ENCODE measurements at regions of chr1 and their contacts with region 1.

Region 1: DNA sequence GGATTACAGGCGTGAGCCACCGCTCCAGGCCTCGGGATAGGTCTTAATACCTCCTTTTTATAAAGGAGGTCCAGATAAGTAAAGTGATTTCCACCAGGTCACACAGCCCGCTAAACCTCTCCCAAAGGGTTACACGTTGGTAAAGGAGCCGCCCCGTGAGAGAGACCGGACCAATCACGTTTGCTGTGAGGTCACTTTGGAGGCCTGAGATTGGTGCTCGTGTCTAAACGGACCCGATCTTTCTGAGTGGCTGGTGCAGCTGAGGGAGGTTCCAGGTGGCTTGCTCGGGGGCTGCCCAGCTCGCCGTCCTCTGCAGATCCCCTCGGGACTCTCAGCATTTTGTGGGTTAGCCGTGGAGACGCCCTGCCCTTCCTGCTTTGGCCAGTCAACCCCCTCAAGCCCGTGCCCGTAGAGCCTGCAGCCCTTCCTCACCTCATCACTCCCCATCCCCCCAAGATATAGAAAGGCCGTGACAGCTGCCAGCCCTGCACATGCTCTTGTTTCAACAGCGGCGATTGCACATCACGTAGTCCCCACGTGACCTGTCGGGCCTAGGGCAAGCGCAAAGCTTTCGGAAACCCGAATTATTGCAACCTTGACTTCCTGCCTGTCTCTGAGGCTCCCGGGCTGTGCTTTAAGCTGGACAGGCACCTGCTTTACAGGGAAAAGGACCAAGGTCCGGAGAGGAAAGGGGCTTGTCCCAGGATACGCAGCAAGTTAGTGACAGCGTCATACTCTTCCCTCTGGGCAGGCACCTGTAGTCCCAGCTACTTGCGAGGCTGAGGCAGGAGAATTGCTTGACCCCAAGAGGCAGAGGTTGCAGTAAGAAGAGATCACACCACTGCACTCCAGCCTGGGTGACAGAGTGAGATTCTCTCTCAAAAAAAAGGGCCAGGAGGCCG is 5.0 kb upstream of the COA7 start:
- DNase-seq: peak; percentile 74
- ATAC-seq: peak; percentile 87
- H3K4me3 Mint-ChIP-seq: peak overlapping the region; percentile 87
- H3K27ac Mint-ChIP-seq: peak overlapping the region; percentile 98
- H3K4me1 Mint-ChIP-seq: peaks cover 26% of the 10 kb centered on the region
- H3K27me3 Mint-ChIP-seq: peaks cover 2% of the 10 kb centered on the region
- CTCF ChIP-seq: no peak

Region 2: GRCh38 chr1:50968158-50968820 is 1734.8 kb before region 1 on chr1:
- CTCF ChIA-PET with region 1: no interaction called
- POLR2A ChIA-PET with region 1: no interaction called
- intact Hi-C with region 1: loop called (anchors 10 kb)
- DNase-seq: peak; percentile 80
- ATAC-seq: peak; percentile 80
- H3K4me3 Mint-ChIP-seq: peak overlapping the region; percentile 98
- H3K27ac Mint-ChIP-seq: peak overlapping the region; percentile 87
- H3K4me1 Mint-ChIP-seq: peaks cover 18% of the 10 kb centered on the region
- H3K27me3 Mint-ChIP-seq: no peaks in the 10 kb centered on the region
- CTCF ChIP-seq: no peak

Region 3: DNA sequence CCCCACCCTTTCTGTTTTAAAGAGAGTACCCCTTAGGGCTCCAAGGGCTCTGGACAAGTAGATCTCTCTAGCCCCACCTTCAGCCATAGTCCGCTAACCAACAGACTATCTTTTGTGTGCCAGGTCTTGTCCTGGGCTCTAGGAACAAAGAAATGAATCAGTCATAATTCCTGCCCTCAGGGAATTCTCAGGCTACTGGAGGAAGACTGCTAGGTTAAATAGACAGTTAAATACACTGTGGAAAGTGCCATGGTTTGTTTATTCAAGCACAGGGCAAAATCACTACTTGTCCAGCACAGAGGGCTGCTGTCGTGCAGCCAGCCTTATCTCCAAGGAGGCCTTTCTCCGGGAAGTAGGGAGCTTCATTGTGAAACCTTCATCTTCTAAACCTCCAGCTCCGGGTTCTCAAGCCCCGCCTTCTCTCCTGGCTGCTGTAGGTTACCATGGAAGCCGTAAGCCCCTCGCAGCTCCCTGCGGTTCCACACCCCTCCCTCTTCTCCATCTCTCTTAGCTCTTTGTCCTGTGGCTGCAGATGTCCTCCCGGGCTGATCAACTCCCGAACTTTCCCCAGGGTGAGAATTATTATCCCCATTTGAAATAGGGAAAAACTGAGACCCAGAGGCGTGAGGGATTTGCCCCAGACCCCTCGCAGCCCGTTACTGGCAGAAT is 40.4 kb before region 1 on chr1:
- CTCF ChIA-PET with region 1: no interaction called
- POLR2A ChIA-PET with region 1: no interaction called
- intact Hi-C with region 1: no loop called
- DNase-seq: no peak
- ATAC-seq: no peak
- H3K4me3 Mint-ChIP-seq: no peak overlapping the region
- H3K27ac Mint-ChIP-seq: peak overlapping the region; percentile 61
- H3K4me1 Mint-ChIP-seq: peaks cover 26% of the 10 kb centered on the region
- H3K27me3 Mint-ChIP-seq: no peaks in the 10 kb centered on the region
- CTCF ChIP-seq: no peak

Region 4: DNA sequence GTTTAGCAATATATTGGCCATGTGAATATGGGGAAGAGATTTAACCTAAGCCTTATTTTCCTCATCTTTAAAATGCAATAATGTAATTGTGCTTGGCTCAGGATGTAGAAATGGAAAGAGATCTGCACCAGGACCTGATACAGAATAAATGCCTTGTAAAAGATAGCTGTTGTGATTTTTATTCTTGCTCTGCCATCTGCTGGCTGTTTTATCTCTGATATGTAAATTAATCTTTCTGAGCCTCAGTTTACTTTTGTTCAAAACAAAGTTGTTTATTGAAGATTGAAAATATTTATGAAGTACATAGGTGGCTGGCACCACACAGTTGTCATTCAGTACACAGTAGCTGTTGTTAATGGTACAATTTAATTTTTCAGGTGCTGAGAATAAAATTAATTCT is 45.0 kb after region 1 on chr1:
- CTCF ChIA-PET with region 1: interaction called, 11 read pairs
- POLR2A ChIA-PET with region 1: no interaction called
- intact Hi-C with region 1: loop called (anchors 1 kb)
- DNase-seq: no peak
- ATAC-seq: no peak
- H3K4me3 Mint-ChIP-seq: no peak overlapping the region
- H3K27ac Mint-ChIP-seq: no peak overlapping the region
- H3K4me1 Mint-ChIP-seq: peaks cover 4% of the 10 kb centered on the region
- H3K27me3 Mint-ChIP-seq: no peaks in the 10 kb centered on the region
- CTCF ChIP-seq: no peak

Region 5: DNA sequence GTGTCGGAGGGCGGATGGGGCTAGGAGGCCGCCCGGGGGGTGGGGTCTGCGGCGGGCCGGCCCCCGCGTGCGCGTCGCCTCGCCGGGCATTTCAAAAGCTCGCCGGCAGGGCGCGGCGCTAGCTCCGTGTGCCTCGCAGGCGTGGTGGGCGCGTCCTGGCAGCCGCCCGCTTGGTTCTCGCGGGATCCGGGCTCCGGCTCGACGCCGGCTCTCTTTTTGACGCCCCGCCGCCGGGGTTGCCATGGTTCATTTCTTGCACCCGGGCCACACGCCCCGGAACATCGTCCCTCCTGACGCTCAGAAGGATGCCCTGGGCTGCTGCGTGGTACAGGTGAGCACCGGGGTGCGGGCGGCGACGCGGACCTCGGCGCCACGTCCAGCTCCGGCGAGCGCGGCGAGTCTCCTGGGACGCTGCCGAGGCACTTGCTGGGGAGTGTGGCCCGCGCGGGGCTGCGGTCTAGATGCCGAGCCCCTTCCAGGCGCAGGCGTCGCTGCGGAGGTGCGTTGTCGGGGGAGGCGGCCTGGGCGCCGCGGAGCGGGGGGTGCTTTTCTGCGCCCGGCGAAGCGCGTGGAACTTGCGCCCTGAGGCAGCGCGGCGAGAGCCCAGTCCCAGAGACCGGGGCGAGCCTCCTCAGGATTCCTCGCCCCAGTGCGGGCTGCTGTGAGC is 139.6 kb after region 1 on chr1 and contains the start of gene ZYG11A:
- CTCF ChIA-PET with region 1: no interaction called
- POLR2A ChIA-PET with region 1: interaction called, 5 read pairs
- intact Hi-C with region 1: loop called (anchors 5 kb)
- DNase-seq: peak; percentile 74
- ATAC-seq: peak; percentile 97
- H3K4me3 Mint-ChIP-seq: peak within 1 kb of the TSS; percentile 80
- H3K27ac Mint-ChIP-seq: peak within 1 kb of the TSS; percentile 59
- H3K4me1 Mint-ChIP-seq: peaks cover 6% of the 10 kb centered on the region
- H3K27me3 Mint-ChIP-seq: peaks cover 6% of the 10 kb centered on the region
- CTCF ChIP-seq: no peak
- total RNA-seq, gene ZYG11A: 1.3 and 1.5 TPM in 2 replicates

Region 6: GRCh38 chr1:52856026-52856425 is 152.9 kb after region 1 on chr1:
- CTCF ChIA-PET with region 1: no interaction called
- POLR2A ChIA-PET with region 1: no interaction called
- intact Hi-C with region 1: no loop called
- DNase-seq: no peak
- ATAC-seq: no peak
- H3K4me3 Mint-ChIP-seq: no peak overlapping the region
- H3K27ac Mint-ChIP-seq: no peak overlapping the region
- H3K4me1 Mint-ChIP-seq: no peaks in the 10 kb centered on the region
- H3K27me3 Mint-ChIP-seq: no peaks in the 10 kb centered on the region
- CTCF ChIP-seq: no peak

Region 7: GRCh38 chr1:53014791-53015507 is 311.8 kb after region 1 on chr1:
- CTCF ChIA-PET with region 1: no interaction called
- POLR2A ChIA-PET with region 1: interaction called, 3 read pairs
- intact Hi-C with region 1: loop called (anchors 5 kb)
- DNase-seq: peak; percentile 37
- ATAC-seq: peak; percentile 94
- H3K4me3 Mint-ChIP-seq: peak overlapping the region; percentile 92
- H3K27ac Mint-ChIP-seq: peak overlapping the region; percentile 72
- H3K4me1 Mint-ChIP-seq: peaks cover 36% of the 10 kb centered on the region
- H3K27me3 Mint-ChIP-seq: no peaks in the 10 kb centered on the region
- CTCF ChIP-seq: no peak

Region 8: GRCh38 chr1:53196485-53197270 is 493.5 kb after region 1 on chr1 and contains the start of gene CPT2:
- CTCF ChIA-PET with region 1: no interaction called
- POLR2A ChIA-PET with region 1: no interaction called
- intact Hi-C with region 1: loop called (anchors 1 kb)
- DNase-seq: peak; percentile 89
- ATAC-seq: peak; percentile 99
- H3K4me3 Mint-ChIP-seq: peak within 1 kb of the TSS; percentile 92
- H3K27ac Mint-ChIP-seq: peak within 1 kb of the TSS; percentile 94
- H3K4me1 Mint-ChIP-seq: peaks cover 25% of the 10 kb centered on the region
- H3K27me3 Mint-ChIP-seq: no peaks in the 10 kb centered on the region
- CTCF ChIP-seq: no peak
- total RNA-seq, gene CPT2: 12.5 and 15.7 TPM in 2 replicates